Aorta (tissue), 5 donors: ENCODE measurements at regions of chr1 and their contacts with region 1.

Region 1: GRCh38 chr1:165914136-165914798 is 86.9 kb downstream of the UCK2 start:
- DNase-seq: no peak
- ATAC-seq: peak; percentile 78
- H3K4me3 ChIP-seq: no peak overlapping the region
- H3K27ac ChIP-seq: no peak overlapping the region
- H3K4me1 ChIP-seq: no peaks in the 10 kb centered on the region
- H3K27me3 ChIP-seq: no peaks in the 10 kb centered on the region

Region 2: DNA sequence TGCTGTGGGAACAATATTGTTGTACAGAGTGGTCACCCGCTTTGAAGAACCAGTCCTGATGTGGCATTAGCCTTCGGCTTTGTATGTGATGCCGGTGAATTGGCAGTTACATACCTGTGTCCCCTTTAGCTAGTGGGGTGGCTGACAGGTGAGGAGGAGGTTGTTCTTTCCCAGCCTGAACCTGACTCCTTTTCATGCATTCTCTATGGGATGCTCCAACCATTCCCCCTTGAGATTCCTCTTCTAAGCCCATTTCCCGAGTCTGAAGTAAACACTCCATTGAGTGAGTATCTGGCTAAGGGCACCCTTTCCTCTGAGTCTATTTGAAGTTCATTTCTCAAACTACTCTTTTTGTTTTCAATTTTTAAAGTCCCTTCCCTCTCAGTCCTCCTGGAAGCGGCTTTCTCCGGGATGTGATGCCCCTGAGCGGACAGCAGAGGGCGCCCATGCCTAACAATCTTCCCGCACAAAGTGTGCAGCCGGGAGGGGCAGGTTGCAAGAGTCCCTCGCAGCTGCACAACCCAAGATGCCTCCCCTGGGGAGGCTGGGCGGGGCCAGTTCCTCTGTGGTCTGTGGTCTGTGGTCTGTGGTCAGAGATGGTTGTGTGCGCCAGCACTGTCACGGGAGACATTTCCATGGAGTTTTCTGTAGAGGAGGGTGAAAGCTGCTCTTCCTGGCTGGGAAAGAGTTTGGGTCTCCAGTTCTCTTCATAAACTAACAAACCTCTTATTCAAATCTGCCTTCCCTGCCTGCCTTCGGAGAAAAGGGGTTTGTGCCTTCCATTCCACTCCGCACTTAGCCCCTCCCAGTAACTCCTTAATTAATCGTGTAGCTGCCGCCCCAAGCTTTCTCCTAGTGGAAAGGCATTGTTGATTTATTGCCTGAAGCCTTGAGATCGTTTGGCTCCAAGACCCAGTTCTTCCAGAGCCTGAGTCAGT is 521.4 kb before region 1 on chr1:
- intact Hi-C with region 1: loop called (anchors 10 kb)
- DNase-seq: peak; percentile 93 to 94
- ATAC-seq: peak; percentile 92
- H3K4me3 ChIP-seq: no peak overlapping the region
- H3K27ac ChIP-seq: no peak overlapping the region
- H3K4me1 ChIP-seq: peaks cover 0 to 3% of the 10 kb centered on the region in 2 donors
- H3K27me3 ChIP-seq: no peaks in the 10 kb centered on the region

Region 3: GRCh38 chr1:165717918-165718515 is 196.2 kb before region 1 on chr1:
- intact Hi-C with region 1: loop called (anchors 5 kb)
- DNase-seq: no peak
- ATAC-seq: no peak
- H3K4me3 ChIP-seq: no peak overlapping the region
- H3K27ac ChIP-seq: no peak overlapping the region
- H3K4me1 ChIP-seq: no peaks in the 10 kb centered on the region
- H3K27me3 ChIP-seq: no peaks in the 10 kb centered on the region

Region 4: DNA sequence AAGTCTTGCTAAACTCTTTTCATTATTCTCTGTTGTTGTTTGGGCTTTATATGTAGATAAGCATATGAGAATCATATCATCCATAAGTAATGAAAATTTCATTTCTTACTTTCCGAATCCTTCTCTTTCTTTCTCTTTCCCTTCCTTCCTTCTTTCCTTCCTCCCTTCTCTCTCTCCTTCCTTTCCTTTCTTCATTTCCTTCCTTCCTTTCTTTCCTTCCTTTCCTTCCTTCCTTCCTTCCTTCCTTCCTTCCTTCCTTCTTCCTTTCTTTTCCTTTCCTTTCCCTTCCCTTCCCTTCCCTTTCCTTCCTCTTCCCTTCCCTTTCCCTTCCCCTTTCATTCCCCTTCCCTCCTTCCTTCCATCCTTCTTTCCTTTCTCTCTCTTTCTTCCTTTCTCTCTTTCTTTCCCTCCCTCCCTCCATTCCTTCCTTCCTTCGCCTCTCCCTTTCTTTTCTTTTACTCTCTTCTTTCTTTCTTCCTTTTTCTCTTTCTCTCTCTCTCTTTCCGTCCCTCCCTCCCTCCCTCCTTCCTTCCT is 60.4 kb after region 1 on chr1:
- intact Hi-C with region 1: no loop called
- DNase-seq: no peak
- ATAC-seq: no peak
- H3K4me3 ChIP-seq: no peak overlapping the region
- H3K27ac ChIP-seq: no peak overlapping the region
- H3K4me1 ChIP-seq: no peaks in the 10 kb centered on the region
- H3K27me3 ChIP-seq: no peaks in the 10 kb centered on the region

Region 5: DNA sequence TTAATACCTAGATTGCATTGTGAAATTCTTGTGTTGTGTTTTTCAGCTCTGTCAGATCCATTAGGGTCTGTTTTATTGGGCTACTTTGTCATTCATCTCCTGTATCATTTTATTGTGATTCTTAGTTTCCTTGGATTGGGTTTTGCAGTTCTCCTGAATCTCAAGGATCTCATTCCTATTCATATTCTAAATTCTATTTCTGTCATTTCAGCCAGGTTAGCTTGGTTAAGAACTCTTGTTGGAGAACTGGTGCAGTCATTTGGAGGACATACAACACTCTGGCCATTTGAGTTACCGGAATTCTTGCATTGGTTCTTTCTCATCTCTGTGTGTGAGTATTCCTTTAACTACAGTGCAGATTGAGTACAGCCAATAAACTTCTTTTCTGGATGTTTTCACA is 92.9 kb after region 1 on chr1:
- intact Hi-C with region 1: no loop called
- DNase-seq: no peak
- ATAC-seq: no peak
- H3K4me3 ChIP-seq: no peak overlapping the region
- H3K27ac ChIP-seq: no peak overlapping the region
- H3K4me1 ChIP-seq: no peaks in the 10 kb centered on the region
- H3K27me3 ChIP-seq: no peaks in the 10 kb centered on the region